Posterior vena cava (tissue), 2 donors: ENCODE measurements at regions of chr19 and their contacts with region 1.

Region 1: DNA sequence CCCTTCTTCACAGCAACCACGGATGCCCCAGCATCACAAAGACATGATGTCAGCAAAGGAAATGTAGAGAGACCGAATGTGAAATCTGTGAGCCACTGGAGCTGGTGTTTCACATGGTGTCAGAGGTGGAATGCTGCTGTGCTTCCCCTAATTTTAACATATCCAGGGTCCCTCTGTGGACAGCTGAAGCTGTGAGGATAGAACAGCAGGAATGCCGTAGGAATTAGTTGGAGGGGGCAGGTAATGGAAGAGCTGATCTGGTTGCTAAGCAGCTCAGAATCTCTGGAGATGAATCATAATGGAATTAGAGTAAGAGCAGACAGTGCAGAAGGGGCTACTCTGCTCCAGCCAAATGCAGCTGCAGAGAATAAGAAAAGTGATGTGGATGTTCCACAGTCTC is 68.9 kb upstream of the ZNF835 start:
- DNase-seq: no peak

Region 2: DNA sequence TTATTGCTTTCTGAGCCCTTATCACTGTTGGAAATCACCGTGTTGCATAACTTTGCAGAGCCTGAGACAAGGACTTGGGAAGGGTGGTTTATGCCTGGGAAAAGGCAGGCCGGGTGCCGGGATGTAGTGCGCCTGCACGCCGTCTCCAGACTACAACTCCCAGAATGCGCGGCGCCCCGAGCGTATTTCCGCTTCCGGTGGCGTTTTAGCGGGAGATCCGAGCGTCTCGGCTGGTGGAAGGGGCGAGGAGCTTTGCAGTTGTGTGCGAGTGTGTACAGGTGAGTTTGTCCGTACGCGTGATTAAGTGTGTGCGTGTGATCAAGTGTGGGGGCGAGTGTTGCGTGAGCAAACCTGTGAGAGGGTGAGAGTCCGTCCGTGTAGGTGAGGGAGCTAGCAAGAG is 24.6 kb after region 1 on chr19:
- intact Hi-C with region 1: loop called in 1 of 2 experiments (anchors 1 kb)
- DNase-seq: peak; percentile 90

Region 3: GRCh38 chr19:56995303-56995702 is 254.8 kb after region 1 on chr19:
- intact Hi-C with region 1: no loop called
- DNase-seq: peak; percentile 51

Region 4: DNA sequence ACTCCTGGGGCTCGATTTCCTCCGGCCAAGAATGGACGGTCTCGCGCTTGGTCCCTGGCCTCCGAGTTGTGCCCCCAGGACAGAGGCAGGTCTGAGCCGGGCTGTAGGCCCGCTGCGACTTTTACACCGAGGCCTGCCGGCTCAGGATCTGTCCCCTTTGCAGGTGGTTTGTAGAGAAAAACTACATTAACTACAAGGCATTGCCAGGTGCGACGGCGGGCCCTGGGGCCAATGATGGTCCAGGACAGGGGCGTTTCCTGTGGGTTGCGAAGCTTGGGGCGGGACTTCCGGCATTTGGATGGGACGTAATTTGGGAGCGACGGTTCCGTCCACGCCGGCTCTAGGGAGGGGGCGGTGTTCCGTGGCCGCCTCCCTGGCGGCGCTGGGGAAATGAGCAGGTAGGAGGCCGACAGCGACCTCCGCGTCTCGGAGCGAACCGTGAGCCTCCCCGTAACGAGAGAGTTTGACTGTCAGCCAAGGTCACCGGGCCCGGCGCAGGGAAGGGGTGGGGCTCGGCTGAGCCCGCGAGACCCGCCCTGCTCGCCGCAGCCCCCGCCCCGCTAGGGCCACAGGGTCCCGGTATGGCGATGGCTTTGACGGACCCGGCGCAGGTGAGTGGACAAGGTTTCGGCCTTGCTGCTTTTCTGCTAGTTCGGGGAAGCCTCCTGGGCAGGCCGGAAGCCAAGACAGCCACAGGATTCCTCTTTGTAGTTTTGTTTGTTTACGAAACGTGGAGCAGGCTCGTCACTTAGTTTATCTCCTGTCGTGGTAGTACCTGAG is 500.0 kb after region 1 on chr19 and contains the start of gene ZNF805:
- intact Hi-C with region 1: no loop called
- DNase-seq: peak; percentile 99
- total RNA-seq, gene ZNF805: 12.9 to 15.5 TPM